ENCODE measurements at regions of chr4 and their contacts with region 1.

Region 1: GRCh38 chr4:71677568-71677967 is 106.3 kb downstream of the GC start:
- DNase-seq: no peak
- H3K4me3 Mint-ChIP-seq: no peak overlapping the region
- H3K27ac Mint-ChIP-seq: no peak overlapping the region
- H3K4me1 Mint-ChIP-seq: no peaks in the 10 kb centered on the region
- H3K27me3 Mint-ChIP-seq: no peaks in the 10 kb centered on the region
- CTCF ChIP-seq: no peak

Region 2: GRCh38 chr4:71322425-71322824 is 355.1 kb before region 1 on chr4:
- CTCF ChIA-PET with region 1: no interaction called
- POLR2A ChIA-PET with region 1: no interaction called
- intact Hi-C with region 1: no loop called
- DNase-seq: no peak
- H3K4me3 Mint-ChIP-seq: no peak overlapping the region
- H3K27ac Mint-ChIP-seq: no peak overlapping the region
- H3K4me1 Mint-ChIP-seq: no peaks in the 10 kb centered on the region
- H3K27me3 Mint-ChIP-seq: no peaks in the 10 kb centered on the region
- CTCF ChIP-seq: no peak

Region 3: DNA sequence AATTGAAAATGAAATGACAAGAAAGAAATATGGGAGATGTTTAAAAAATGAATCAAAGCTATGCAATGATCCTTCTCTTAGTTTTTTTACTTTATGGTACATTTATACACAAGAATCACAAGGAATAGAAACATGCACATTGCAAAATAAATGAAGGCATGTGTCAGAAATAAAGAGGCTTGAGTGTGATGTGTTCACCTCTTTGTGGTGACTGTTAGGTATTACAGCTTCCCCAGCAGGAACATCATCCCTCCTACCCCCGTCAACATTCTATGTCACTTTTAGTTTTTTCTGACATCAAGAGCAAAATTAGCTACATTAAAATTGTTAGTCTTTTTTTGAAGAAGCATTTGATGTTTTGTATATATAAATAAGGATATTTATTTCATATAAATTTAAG is 124.0 kb before region 1 on chr4:
- CTCF ChIA-PET with region 1: no interaction called
- POLR2A ChIA-PET with region 1: no interaction called
- intact Hi-C with region 1: no loop called
- DNase-seq: peak; percentile 41
- H3K4me3 Mint-ChIP-seq: no peak overlapping the region
- H3K27ac Mint-ChIP-seq: no peak overlapping the region
- H3K4me1 Mint-ChIP-seq: no peaks in the 10 kb centered on the region
- H3K27me3 Mint-ChIP-seq: no peaks in the 10 kb centered on the region
- CTCF ChIP-seq: peak; percentile 51

Region 4: GRCh38 chr4:71696992-71697391 is 19.4 kb after region 1 on chr4:
- CTCF ChIA-PET with region 1: interaction called, 3 read pairs
- POLR2A ChIA-PET with region 1: no interaction called
- intact Hi-C with region 1: loop called (anchors 2 kb)
- DNase-seq: no peak
- H3K4me3 Mint-ChIP-seq: no peak overlapping the region
- H3K27ac Mint-ChIP-seq: no peak overlapping the region
- H3K4me1 Mint-ChIP-seq: peaks cover 1% of the 10 kb centered on the region
- H3K27me3 Mint-ChIP-seq: no peaks in the 10 kb centered on the region
- CTCF ChIP-seq: no peak